ENCODE measurements at regions of chr4 and their contacts with region 1.

Region 1: DNA sequence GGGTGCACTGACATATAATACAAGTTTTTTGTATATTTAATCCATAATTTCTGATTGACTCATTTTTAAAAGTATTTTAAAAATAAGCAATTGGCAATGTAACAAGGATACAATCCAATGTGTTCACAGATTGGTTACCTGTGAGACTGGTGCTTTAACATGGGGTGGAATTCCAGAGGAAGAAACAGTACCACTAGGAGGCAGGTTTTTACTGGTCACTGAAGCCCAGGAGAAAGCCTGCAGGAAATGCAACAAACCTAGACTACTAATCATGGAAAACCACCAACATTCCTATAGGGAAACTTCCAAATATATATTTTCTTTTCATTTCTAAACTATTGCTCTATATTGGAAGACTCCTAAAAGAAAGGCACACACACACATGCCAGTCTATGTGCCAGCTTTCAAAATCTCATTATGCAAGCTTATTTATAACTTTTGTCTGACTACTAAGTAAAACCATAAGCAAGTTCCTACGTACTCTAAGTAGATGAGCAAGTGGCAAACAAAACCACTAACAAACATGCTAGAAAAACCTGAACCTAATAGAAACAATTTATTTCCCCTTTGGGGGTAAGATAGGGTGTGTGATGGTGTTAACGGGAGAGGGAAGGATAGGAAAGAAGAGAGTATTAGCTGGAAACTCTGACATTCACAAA is 19.2 kb downstream of the G3BP2 start:
- DNase-seq: no peak
- H3K4me3 ChIP-seq: no peak overlapping the region
- H3K27ac ChIP-seq: no peak overlapping the region
- H3K4me1 ChIP-seq: no peaks in the 10 kb centered on the region
- H3K27me3 ChIP-seq: no peaks in the 10 kb centered on the region
- CTCF ChIP-seq: peak in 2 of 3 experiments; percentile 61 to 69; a peak in 3 of 4 replicates
- EP300 ChIP-seq: no peak
- POLR2A ChIP-seq: no peak
- RAD21 ChIP-seq: peak; percentile 73 to 77

Region 2: GRCh38 chr4:75666299-75666698 is 12.3 kb after region 1 on chr4:
- CTCF ChIA-PET with region 1: interaction called, 28 read pairs
- POLR2A ChIA-PET with region 1: interaction called, 16 read pairs
- DNase-seq: no peak
- H3K4me3 ChIP-seq: peak overlapping the region in 1 of 4 experiments; percentile 14; a peak in 2 of 8 replicates
- H3K27ac ChIP-seq: no peak overlapping the region
- H3K4me1 ChIP-seq: peaks cover 0 to 4% (median 3%) of the 10 kb centered on the region in 4 experiments; a peak in 4 of 7 replicates
- H3K27me3 ChIP-seq: no peaks in the 10 kb centered on the region
- CTCF ChIP-seq: no peak
- EP300 ChIP-seq: no peak
- POLR2A ChIP-seq: no peak
- RAD21 ChIP-seq: no peak

Region 3: DNA sequence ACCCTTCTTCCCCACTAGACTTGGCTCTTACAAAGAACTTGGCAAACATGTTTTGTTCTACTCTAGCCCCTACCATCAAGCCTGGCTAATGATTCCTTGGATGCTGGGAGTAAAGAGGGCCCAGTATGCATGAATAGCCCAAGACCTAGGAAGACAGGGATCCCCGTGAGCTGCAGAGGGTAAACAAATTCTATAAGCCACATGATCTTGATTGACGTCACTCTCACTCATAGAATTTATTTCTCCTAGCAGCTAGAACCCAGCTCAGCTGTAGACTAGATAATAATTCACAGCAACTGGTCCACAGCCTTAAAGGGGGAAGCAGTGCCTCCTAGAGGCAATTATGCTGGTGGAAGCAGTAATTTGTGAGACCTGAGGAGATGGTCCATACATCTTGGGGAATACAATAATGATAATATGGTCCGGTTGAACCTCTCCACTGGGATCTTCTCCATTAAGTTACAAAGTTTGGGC is 54.3 kb after region 1 on chr4:
- CTCF ChIA-PET with region 1: interaction called, 26 read pairs
- POLR2A ChIA-PET with region 1: interaction called, 3 read pairs
- DNase-seq: peak in 1 of 2 experiments; percentile 50
- H3K4me3 ChIP-seq: no peak overlapping the region
- H3K27ac ChIP-seq: peak overlapping the region; percentile 8; the same call in 1 of the 2 replicates
- H3K4me1 ChIP-seq: peaks cover 8 to 16% (median 12%) of the 10 kb centered on the region in 4 experiments; a peak in 6 of 7 replicates
- H3K27me3 ChIP-seq: no peaks in the 10 kb centered on the region
- CTCF ChIP-seq: peak in 2 of 3 experiments; percentile 63 to 75; a peak in 3 of 4 replicates
- EP300 ChIP-seq: no peak
- POLR2A ChIP-seq: no peak
- RAD21 ChIP-seq: peak; percentile 74 to 78

Region 4: GRCh38 chr4:75715105-75715799 is 61.3 kb after region 1 on chr4:
- CTCF ChIA-PET with region 1: interaction called, 26 read pairs
- POLR2A ChIA-PET with region 1: interaction called, 3 read pairs
- DNase-seq: peak in 1 of 2 experiments; percentile 41
- H3K4me3 ChIP-seq: no peak overlapping the region
- H3K27ac ChIP-seq: no peak overlapping the region
- H3K4me1 ChIP-seq: no peaks in the 10 kb centered on the region; a peak in 2 of 7 replicates
- H3K27me3 ChIP-seq: no peaks in the 10 kb centered on the region
- CTCF ChIP-seq: no peak
- EP300 ChIP-seq: no peak
- POLR2A ChIP-seq: no peak
- RAD21 ChIP-seq: no peak